IMR-90 (cell line): ENCODE measurements at regions of chrX and their contacts with region 1.

Region 1: DNA sequence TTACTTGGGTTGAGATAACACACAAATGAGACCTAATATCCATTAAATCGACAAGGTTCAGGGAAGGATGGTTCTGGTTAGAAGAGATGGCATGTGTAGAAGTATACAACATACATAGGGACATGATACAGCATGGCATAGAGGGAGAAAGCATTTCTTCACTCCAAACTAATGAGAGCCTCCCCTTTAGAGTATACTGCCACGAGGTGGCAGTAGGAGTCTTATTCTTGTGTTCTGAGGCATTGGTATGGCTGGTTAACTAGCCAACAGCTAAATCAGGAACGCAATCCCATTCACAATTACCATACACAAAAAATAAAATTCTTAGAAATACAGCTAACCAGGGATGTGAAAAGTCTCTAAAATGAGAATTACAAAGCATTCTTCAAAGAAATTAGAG is 29.1 kb upstream of the TRO start:
- DNase-seq: peak; percentile 28
- ATAC-seq: peak; percentile 81
- H3K4me3 ChIP-seq: no peak overlapping the region
- H3K27ac ChIP-seq: no peak overlapping the region
- H3K4me1 ChIP-seq: no peaks in the 10 kb centered on the region
- H3K27me3 ChIP-seq: no peaks in the 10 kb centered on the region; the same call in 1 of the 2 replicates
- CTCF ChIP-seq: peak; percentile 51
- POLR2A ChIP-seq: no peak
- RAD21 ChIP-seq: peak; percentile 58

Region 2: GRCh38 chrX:54950730-54951375 is 59.3 kb after region 1 on chrX:
- CTCF ChIA-PET with region 1: no interaction called
- POLR2A ChIA-PET with region 1: no interaction called
- dilution Hi-C with region 1: no loop called
- in situ Hi-C with region 1: loop called (anchors 10 kb)
- intact Hi-C with region 1: no loop called
- DNase-seq: no peak
- ATAC-seq: no peak
- H3K4me3 ChIP-seq: no peak overlapping the region
- H3K27ac ChIP-seq: no peak overlapping the region
- H3K4me1 ChIP-seq: no peaks in the 10 kb centered on the region
- H3K27me3 ChIP-seq: peaks cover 2% of the 10 kb centered on the region; the same call in 1 of the 2 replicates
- CTCF ChIP-seq: no peak
- POLR2A ChIP-seq: no peak
- RAD21 ChIP-seq: no peak

Region 3: GRCh38 chrX:54980334-54980733 is 88.8 kb after region 1 on chrX:
- CTCF ChIA-PET with region 1: no interaction called
- POLR2A ChIA-PET with region 1: no interaction called
- dilution Hi-C with region 1: no loop called
- in situ Hi-C with region 1: no loop called
- intact Hi-C with region 1: loop called (anchors 10 kb)
- DNase-seq: no peak
- ATAC-seq: no peak
- H3K4me3 ChIP-seq: no peak overlapping the region
- H3K27ac ChIP-seq: no peak overlapping the region
- H3K4me1 ChIP-seq: no peaks in the 10 kb centered on the region
- H3K27me3 ChIP-seq: peaks cover 2% of the 10 kb centered on the region
- CTCF ChIP-seq: no peak
- POLR2A ChIP-seq: no peak
- RAD21 ChIP-seq: no peak

Region 4: DNA sequence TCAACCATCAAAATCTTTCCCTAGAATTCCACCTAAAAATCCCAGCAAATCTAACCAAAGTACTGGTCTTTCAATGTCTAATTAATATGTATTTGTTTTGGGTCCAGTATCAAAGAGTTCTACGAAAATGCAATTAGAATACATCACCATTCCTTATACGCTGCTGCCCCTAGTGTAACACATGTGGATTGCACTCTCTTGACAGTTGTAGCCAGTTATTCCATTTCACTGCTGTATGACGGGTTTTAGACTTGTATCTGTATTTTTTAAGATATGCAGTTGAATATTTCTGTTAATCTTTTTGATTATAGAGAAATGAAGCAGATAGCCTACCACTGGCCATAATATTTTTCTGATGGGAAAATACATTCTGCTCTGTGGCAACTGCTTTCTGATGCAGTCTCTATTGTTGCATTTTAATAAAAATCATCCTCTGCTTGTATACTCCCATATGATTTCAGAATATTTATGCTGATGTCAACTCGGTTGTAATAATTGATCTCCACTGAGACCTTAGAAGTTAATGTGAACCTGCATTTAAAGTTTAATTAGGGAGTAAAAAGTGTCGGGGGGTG is 166.2 kb after region 1 on chrX:
- CTCF ChIA-PET with region 1: interaction called, 7 read pairs
- POLR2A ChIA-PET with region 1: no interaction called
- dilution Hi-C with region 1: no loop called
- in situ Hi-C with region 1: no loop called
- intact Hi-C with region 1: loop called (anchors 1 kb)
- DNase-seq: peak; percentile 28
- ATAC-seq: peak; percentile 82
- H3K4me3 ChIP-seq: no peak overlapping the region
- H3K27ac ChIP-seq: no peak overlapping the region
- H3K4me1 ChIP-seq: no peaks in the 10 kb centered on the region
- H3K27me3 ChIP-seq: no peaks in the 10 kb centered on the region; the same call in 1 of the 2 replicates
- CTCF ChIP-seq: peak; percentile 74
- POLR2A ChIP-seq: no peak
- RAD21 ChIP-seq: peak; percentile 85

Region 5: GRCh38 chrX:55088795-55089489 is 197.4 kb after region 1 on chrX and contains the start of gene PAGE2:
- CTCF ChIA-PET with region 1: no interaction called
- POLR2A ChIA-PET with region 1: no interaction called
- dilution Hi-C with region 1: no loop called
- in situ Hi-C with region 1: no loop called
- intact Hi-C with region 1: no loop called
- DNase-seq: no peak
- ATAC-seq: no peak
- H3K4me3 ChIP-seq: no peak within 1 kb of the TSS
- H3K27ac ChIP-seq: no peak within 1 kb of the TSS
- H3K4me1 ChIP-seq: no peaks in the 10 kb centered on the region
- H3K27me3 ChIP-seq: no peaks in the 10 kb centered on the region; the same call in 1 of the 2 replicates
- CTCF ChIP-seq: no peak
- POLR2A ChIP-seq: no peak
- RAD21 ChIP-seq: no peak
- total RNA-seq, gene PAGE2: not detected in 2 replicates